ENCODE measurements at regions of chr2 and their contacts with region 1.

Region 1: DNA sequence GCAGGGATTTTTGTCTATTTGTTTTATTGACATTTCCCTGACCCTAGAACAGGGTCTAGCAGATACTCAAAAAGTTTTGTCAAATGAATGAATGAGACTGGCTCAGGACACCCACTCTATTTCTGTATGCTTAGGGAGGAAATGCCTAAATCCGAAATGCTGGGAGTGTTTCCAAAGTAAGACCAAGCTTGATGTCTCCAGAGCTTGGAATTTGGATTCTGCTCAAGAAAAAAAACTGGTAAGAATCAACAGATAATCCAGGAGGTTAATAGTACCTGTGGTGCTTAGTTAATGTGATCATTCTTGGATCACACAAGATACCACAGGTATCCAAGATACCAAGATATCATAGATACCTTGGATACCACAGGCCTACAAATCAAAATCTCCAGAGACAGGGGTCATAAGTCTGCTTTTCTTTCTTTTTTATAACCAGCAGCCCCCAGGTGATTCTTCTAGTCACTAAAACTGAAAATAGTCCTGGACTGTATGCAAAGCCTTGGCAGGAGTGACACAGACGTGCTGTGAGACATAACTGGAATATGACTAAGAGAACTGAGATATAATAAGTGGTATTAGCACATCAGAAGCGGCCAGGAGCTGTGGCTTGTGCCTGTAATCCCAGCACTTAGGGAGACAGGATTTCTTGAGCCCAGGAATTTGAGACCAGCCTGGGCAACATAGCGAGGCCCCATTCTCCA is 39.9 kb upstream of the SP3 start:
- DNase-seq: no peak

Region 2: GRCh38 chr2:173872711-173873412 is 132.2 kb before region 1 on chr2:
- intact Hi-C with region 1: no loop called
- DNase-seq: no peak

Region 3: GRCh38 chr2:173884025-173884802 is 120.8 kb before region 1 on chr2:
- intact Hi-C with region 1: loop called (anchors 5 kb)
- DNase-seq: no peak

Region 4: DNA sequence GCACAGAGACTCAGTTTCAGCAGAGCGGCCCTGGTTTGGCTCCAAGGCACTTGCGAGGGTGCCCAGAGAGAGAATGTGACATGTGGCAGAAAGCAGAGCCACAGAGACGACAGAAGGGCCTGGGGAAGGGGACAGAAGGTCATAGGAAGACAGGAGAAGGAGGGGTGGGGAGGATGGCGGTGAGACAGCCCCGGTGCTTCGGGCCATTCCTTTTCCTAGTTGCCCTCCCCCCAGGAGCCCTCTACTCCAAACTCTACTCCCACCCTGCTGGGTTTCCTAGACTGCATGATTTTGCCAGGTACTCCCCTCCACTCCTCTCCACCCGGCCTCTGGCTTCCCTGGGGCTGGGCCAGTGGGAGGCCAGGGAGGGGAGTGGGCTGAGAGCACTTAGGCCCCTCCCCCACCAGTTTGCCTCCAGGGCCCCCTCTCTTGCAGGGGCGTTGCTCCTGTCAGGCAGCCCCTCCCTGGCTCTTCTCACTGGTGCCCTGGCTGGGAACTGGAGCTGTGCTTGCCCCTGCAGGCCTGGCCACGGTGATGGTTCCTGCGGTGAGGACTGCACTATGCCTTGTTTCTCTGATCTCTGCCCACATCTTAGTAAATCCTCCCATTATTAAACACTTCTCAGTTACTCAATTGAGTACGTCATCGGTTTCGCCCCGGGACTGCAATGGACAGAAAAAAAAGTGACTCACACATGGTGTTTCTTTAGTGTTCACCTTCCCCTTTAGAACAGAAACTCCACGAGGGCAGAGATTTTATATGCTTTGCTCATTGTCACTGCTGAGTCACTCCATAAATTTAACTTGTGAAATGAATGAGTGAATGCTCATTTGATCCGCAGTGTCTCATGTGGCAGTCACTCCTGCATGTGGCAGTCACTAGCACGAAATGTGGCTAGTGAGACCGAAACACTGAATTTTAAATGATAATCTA is 18.8 kb after region 1 on chr2:
- intact Hi-C with region 1: loop called (anchors 2 kb)
- DNase-seq: no peak

Region 5: GRCh38 chr2:174035981-174036742 is 31.1 kb after region 1 on chr2:
- intact Hi-C with region 1: no loop called
- DNase-seq: no peak